HAP-1 (cell line): ENCODE measurements at regions of chr18 and their contacts with region 1.

Region 1: GRCh38 chr18:56748698-56749268 is 97.6 kb downstream of the WDR7 start:
- DNase-seq: peak; percentile 37 to 42
- H3K4me3 ChIP-seq: no peak overlapping the region
- H3K4me1 ChIP-seq: no peaks in the 10 kb centered on the region
- H3K27me3 ChIP-seq: no peaks in the 10 kb centered on the region

Region 2: DNA sequence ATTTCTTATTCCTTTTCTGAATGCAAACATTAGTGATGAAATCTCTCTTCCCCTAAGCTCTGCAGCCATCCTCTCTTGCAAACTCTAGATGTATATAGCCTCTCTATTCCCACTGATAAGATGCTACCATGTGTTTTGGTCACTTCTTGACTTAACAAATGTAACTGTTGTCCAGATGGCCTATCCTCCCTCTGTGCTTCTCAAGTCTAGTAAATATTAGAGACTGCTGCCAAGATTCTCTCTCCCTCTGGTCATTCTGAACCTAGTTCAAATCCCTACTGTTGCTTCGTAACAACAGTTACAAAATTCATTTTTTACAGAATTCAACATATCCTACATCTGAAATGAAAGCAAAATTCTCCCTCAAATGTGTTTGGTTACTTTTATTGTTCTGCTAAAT is 267.0 kb before region 1 on chr18:
- in situ Hi-C with region 1: no loop called
- DNase-seq: no peak
- H3K4me3 ChIP-seq: no peak overlapping the region
- H3K4me1 ChIP-seq: no peaks in the 10 kb centered on the region
- H3K27me3 ChIP-seq: no peaks in the 10 kb centered on the region

Region 3: DNA sequence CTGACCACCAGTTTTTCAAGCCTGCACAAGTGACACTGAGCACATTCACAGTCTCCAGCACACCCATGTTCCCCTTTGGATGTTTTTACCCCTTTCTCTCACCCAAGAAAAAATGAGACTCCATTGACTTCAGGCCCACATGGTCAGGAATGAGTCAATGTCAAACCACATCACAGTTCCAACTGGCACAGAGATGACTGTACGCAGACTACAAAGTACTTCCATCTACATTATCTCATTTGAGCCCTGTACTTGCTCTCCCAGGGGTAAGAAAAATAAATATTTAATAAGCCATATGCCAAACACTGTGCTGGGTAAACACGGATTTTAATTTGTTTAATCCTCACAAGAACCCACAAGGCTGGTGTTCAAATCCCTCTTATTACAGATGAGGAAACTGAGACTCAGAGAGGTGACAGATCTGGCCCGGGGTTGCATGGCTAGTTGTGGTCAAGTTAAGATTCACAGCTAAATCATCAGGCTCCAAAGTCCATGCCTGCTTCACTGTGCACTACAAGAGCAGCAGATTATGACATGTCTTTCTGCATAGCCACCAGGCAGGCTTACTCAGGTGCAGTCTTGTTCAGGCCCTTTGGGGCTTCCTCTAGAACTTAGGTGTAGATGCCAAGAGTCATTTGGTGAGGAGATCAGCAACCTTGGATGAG is 216.5 kb before region 1 on chr18:
- in situ Hi-C with region 1: no loop called
- DNase-seq: no peak
- H3K4me3 ChIP-seq: no peak overlapping the region
- H3K4me1 ChIP-seq: no peaks in the 10 kb centered on the region
- H3K27me3 ChIP-seq: no peaks in the 10 kb centered on the region

Region 4: DNA sequence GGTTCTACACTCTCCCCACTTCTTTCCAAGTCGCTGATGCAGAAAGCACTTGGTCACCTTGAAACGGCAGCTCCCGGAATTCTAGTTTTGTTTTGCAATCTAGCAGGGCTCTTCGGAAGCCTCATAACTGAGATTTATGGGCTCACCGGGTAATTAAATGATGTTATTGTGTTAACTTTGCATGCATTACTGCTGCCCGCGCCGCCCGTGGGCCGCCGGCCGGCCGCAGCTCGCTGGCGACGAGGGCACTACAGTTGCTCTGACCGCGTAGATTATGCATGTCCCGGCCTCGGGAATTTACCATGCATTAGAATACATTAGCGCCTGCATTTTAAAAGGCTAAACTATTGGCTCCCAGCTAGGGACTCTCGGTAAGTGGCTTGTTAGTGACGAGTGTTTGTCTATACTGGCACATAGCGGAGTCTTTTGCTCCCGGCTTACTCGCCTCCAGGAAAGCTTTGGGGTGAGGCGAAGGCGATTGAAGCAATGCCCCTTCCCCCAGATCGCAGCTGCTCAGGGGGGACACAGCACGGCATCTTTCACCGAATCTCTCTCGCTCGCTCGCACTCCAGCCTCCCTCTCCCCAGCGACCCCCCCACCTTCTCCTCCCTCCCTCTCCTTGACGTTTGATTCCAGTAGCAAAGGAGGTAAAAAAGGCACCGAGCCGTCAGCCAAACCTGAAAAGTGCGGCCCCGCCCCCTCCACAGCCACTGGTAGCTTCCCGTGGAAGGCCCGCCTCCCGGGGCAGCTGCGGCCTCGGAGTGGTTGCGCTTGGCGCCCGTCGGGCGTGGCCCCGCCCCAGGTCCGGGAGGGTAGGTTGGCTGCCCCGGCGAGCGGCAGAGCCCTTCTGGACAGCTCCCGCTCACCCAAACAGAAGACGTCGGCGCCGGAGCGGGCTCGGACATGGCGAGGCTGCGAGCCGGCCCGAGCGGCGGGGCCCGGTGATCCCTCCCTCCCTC is 686.0 kb after region 1 on chr18 and contains the start of gene ONECUT2:
- in situ Hi-C with region 1: loop called (anchors 25 kb)
- DNase-seq: peak; percentile 95 to 99
- H3K4me3 ChIP-seq: peak within 1 kb of the TSS; percentile 63
- H3K4me1 ChIP-seq: peaks cover 26% of the 10 kb centered on the region
- H3K27me3 ChIP-seq: 0 out of 2 replicates have a peak, but pooled peaks cover 7% of the 10 kb centered on the region

Region 5: GRCh38 chr18:57561728-57562423 is 813.1 kb after region 1 on chr18:
- in situ Hi-C with region 1: loop called (anchors 25 kb)
- DNase-seq: peak; percentile 46 to 54
- H3K4me3 ChIP-seq: no peak overlapping the region
- H3K4me1 ChIP-seq: no peaks in the 10 kb centered on the region
- H3K27me3 ChIP-seq: no peaks in the 10 kb centered on the region